ENCODE measurements at regions of chr9 and their contacts with region 1.

Region 1: GRCh38 chr9:3441197-3441816 is 84.5 kb downstream of the RFX3 start:
- DNase-seq: peak; percentile 34 to 42
- H3K4me3 ChIP-seq: no peak overlapping the region
- H3K4me3 Mint-ChIP-seq: no peak overlapping the region
- H3K27ac Mint-ChIP-seq: no peak overlapping the region
- H3K4me1 ChIP-seq: no peaks in the 10 kb centered on the region
- H3K4me1 Mint-ChIP-seq: no peaks in the 10 kb centered on the region
- H3K27me3 ChIP-seq: no peaks in the 10 kb centered on the region
- H3K27me3 Mint-ChIP-seq: no peaks in the 10 kb centered on the region
- CTCF ChIP-seq: peak; percentile 43 to 54

Region 2: DNA sequence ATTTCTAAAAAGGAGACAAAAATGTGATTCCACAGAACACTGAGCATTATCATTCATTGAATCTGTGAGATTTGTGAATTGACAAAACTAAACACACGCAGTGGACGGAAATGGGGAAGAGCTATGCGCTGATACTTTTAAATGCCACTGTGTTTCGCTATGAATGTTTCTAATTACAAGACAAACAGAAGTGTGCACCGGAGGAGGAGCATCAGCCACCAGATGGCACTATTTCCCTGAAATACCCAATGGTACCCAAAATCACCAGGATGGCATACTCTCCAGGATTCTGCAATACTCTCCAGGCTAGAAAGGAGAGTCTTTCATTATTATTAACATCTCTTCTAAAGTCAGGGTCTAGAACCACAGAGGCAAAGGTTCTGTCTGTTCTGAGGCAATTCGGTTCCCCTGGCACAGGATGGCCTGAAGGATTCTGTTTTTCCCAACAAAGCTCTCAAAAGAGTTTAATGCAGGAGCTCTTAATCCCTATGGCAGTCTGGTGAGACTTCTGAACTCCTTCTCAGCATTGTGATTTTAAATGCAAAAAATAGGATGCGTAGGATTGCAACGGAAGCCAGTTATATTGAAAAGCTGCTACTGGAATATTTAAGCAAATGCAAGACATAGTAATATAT is 583.6 kb before region 1 on chr9:
- CTCF ChIA-PET with region 1: interaction called, 4 read pairs
- POLR2A ChIA-PET with region 1: no interaction called
- intact Hi-C with region 1: loop called (anchors 1 kb)
- DNase-seq: peak; percentile 40 to 65
- H3K4me3 ChIP-seq: no peak overlapping the region
- H3K4me3 Mint-ChIP-seq: no peak overlapping the region
- H3K27ac Mint-ChIP-seq: no peak overlapping the region
- H3K4me1 ChIP-seq: no peaks in the 10 kb centered on the region
- H3K4me1 Mint-ChIP-seq: no peaks in the 10 kb centered on the region
- H3K27me3 ChIP-seq: no peaks in the 10 kb centered on the region
- H3K27me3 Mint-ChIP-seq: peaks cover 19% of the 10 kb centered on the region
- CTCF ChIP-seq: peak; percentile 52 to 62

Region 3: GRCh38 chr9:2872257-2872935 is 568.9 kb before region 1 on chr9:
- CTCF ChIA-PET with region 1: interaction called, 4 read pairs
- POLR2A ChIA-PET with region 1: no interaction called
- intact Hi-C with region 1: loop called (anchors 1 kb)
- DNase-seq: peak in 1 of 2 experiments; percentile 36
- H3K4me3 ChIP-seq: no peak overlapping the region
- H3K4me3 Mint-ChIP-seq: no peak overlapping the region
- H3K27ac Mint-ChIP-seq: no peak overlapping the region
- H3K4me1 ChIP-seq: no peaks in the 10 kb centered on the region
- H3K4me1 Mint-ChIP-seq: peaks cover 6% of the 10 kb centered on the region
- H3K27me3 ChIP-seq: no peaks in the 10 kb centered on the region
- H3K27me3 Mint-ChIP-seq: peaks cover 25% of the 10 kb centered on the region
- CTCF ChIP-seq: peak in 1 of 2 experiments; percentile 29

Region 4: DNA sequence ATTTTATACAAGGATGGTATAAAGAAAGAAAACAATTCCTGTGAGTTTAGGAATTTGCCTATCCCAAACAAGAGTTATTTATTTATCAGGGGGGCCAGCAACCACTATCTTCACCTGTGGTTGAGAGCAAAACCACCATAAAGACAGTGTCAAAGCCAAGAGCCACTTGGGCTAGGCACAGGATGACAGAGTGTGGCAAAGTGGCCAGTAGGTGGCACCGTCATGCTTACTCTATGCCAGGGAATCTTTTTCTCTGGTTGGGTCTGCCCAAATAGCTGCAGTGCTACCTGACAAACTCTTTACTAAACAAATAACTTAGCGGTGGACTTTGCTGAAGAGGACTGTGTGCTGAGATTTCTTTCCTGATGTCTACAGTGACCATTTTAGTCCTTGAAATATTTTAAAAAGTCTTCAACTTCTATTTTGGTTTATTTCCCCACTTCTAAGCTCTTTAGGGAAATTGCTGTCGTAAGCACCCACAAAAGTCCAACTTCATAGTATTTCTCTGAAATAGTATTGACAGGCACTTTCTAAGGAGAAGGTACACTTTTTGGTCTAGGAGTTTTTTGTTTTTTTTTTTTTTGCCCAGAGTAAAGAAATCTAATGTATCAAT is 200.5 kb before region 1 on chr9:
- CTCF ChIA-PET with region 1: interaction called, 16 read pairs
- POLR2A ChIA-PET with region 1: no interaction called
- intact Hi-C with region 1: loop called (anchors 1 kb)
- DNase-seq: peak; percentile 32 to 52
- H3K4me3 ChIP-seq: no peak overlapping the region
- H3K4me3 Mint-ChIP-seq: no peak overlapping the region
- H3K27ac Mint-ChIP-seq: no peak overlapping the region
- H3K4me1 ChIP-seq: no peaks in the 10 kb centered on the region
- H3K4me1 Mint-ChIP-seq: no peaks in the 10 kb centered on the region
- H3K27me3 ChIP-seq: no peaks in the 10 kb centered on the region
- H3K27me3 Mint-ChIP-seq: no peaks in the 10 kb centered on the region
- CTCF ChIP-seq: peak; percentile 37 to 42

Region 5: GRCh38 chr9:3331817-3332216 is 109.5 kb before region 1 on chr9:
- CTCF ChIA-PET with region 1: interaction called, 12 read pairs
- POLR2A ChIA-PET with region 1: no interaction called
- intact Hi-C with region 1: loop called (anchors 1 kb)
- DNase-seq: peak; percentile 16 to 26
- H3K4me3 ChIP-seq: no peak overlapping the region
- H3K4me3 Mint-ChIP-seq: no peak overlapping the region
- H3K27ac Mint-ChIP-seq: no peak overlapping the region
- H3K4me1 ChIP-seq: no peaks in the 10 kb centered on the region
- H3K4me1 Mint-ChIP-seq: no peaks in the 10 kb centered on the region
- H3K27me3 ChIP-seq: no peaks in the 10 kb centered on the region
- H3K27me3 Mint-ChIP-seq: no peaks in the 10 kb centered on the region
- CTCF ChIP-seq: peak in 1 of 2 experiments; percentile 41

Measured in Caco-2 (cell line).